ENCODE measurements at regions of chr14 and their contacts with region 1.

Region 1: DNA sequence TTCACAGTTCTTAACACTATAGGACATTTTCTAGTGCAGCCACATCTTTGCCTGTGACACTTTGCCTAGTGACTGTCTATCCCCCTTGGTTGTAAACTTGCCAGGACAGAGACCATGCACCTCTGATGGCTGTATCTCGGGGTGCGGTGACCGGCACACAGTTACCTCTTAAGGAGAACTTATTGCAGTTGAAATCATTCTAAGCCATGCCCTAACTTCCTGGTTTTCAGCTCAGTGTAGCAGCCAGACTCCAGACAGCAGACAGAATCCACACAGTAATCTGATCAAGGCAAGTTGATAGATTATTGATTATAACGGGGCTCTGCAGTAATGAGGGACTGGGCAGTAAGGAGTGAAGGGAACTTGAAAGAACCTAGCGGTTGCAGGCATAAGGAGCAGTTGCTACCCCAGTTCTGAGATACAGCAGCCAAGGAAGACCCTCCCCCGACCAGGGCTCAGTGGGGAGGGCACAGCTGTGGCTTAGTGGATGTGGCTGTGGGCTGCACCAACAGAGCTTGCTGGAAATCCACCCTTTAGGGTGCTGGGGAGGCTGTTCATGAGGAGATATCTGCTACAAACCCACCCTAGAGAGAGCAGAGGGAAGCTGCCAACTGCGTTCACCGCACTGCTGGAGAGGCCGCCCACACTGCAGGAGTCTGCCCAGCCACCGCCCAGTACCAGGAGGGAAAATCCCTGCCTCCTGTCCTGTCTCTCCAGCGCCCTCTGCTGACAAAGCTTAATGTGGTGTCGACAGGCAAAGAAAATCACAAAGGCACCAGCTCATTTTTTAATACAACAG is 58.2 kb upstream of the BEGAIN start:
- DNase-seq: peak; percentile 94
- ATAC-seq: peak; percentile 86
- H3K4me3 Mint-ChIP-seq: no peak overlapping the region
- H3K27ac Mint-ChIP-seq: no peak overlapping the region
- H3K4me1 Mint-ChIP-seq: peaks cover 35% of the 10 kb centered on the region
- H3K27me3 Mint-ChIP-seq: no peaks in the 10 kb centered on the region
- CTCF ChIP-seq: peak; percentile 82

Region 2: GRCh38 chr14:100375963-100376735 is 269.2 kb before region 1 on chr14:
- CTCF ChIA-PET with region 1: interaction called, 145 read pairs
- POLR2A ChIA-PET with region 1: no interaction called
- intact Hi-C with region 1: no loop called
- DNase-seq: peak; percentile 93
- ATAC-seq: peak; percentile 66
- H3K4me3 Mint-ChIP-seq: peak within 1 kb of the TSS; percentile 98
- H3K27ac Mint-ChIP-seq: peak within 1 kb of the TSS; percentile 100
- H3K4me1 Mint-ChIP-seq: peaks cover 37% of the 10 kb centered on the region
- H3K27me3 Mint-ChIP-seq: no peaks in the 10 kb centered on the region
- CTCF ChIP-seq: no peak

Region 3: DNA sequence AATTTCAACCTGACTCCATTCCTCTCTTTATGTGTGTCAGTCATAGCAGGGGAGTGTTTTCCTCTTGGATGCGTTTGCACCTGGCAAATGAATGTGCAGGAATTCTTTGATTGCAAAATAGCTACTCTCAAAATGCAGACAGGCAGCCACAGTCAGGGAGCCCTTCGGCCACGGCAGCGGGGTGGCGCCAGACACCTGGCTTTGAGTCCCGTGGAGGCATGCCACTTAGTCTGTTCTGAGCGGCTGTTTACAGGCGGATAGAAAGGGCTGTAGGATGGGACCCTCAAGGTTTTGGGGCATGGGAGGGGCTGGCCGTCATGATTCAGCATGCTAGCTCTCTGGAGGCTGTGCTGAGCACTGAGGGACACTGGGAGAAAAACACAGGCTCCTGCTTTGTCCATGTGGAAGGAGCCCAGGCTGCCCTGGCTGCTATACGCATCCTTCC is 205.2 kb before region 1 on chr14:
- CTCF ChIA-PET with region 1: interaction called, 67 read pairs
- POLR2A ChIA-PET with region 1: interaction called, 4 read pairs
- intact Hi-C with region 1: loop called (anchors 5 kb)
- DNase-seq: peak; percentile 60
- ATAC-seq: no peak
- H3K4me3 Mint-ChIP-seq: no peak overlapping the region
- H3K27ac Mint-ChIP-seq: no peak overlapping the region
- H3K4me1 Mint-ChIP-seq: peaks cover 26% of the 10 kb centered on the region
- H3K27me3 Mint-ChIP-seq: no peaks in the 10 kb centered on the region
- CTCF ChIP-seq: no peak

Region 4: GRCh38 chr14:100547633-100548294 is 97.6 kb before region 1 on chr14:
- CTCF ChIA-PET with region 1: interaction called, 24 read pairs
- POLR2A ChIA-PET with region 1: interaction called, 3 read pairs
- intact Hi-C with region 1: no loop called
- DNase-seq: peak; percentile 51
- ATAC-seq: peak; percentile 52
- H3K4me3 Mint-ChIP-seq: peak overlapping the region; percentile 26
- H3K27ac Mint-ChIP-seq: peak overlapping the region; percentile 22
- H3K4me1 Mint-ChIP-seq: peaks cover 18% of the 10 kb centered on the region
- H3K27me3 Mint-ChIP-seq: no peaks in the 10 kb centered on the region
- CTCF ChIP-seq: no peak

Region 5: DNA sequence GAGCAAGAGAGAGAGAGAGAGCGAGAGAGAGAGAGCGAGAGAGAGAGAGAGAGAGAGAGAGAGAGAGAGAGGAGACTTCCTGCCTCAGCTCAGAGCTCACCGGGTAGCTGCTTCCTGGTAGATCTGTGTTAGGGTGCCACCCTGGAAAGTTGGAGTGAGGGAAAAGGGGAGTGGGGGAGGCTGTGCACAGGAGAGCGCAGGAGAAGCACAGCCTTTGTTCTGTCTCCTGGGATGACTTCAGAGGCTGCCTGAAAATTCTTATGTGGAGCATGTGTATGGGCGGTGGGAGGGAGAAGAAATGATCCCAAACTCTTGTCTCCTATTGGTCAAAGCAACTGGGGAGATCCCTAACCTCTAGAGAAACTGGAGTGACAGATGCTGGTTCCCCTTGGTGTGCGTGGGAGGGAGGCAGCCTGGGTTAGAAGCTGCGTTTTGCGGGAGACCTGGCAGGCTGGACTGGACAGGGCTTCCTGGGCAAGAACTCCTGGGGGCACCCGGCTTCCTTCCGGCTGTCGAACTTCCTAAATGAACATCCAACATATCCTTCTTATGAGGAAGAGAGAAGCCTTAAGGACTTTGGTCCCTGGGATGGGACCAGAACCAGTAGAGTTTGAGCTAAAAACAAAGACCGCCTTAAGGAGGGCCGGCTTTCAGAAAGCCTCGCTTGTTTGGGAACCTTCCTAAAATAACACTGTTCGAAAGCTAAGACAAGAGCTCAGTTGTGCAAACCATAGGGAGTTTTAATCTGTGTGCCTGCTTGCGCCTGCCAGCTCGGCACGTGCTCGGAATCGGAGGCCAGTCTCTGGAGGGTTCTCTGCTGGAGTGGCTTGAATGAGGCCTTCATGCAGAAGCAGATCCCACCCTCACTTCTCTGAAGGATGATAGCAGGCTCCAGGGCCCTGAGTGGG is 27.7 kb before region 1 on chr14:
- CTCF ChIA-PET with region 1: interaction called, 27 read pairs
- POLR2A ChIA-PET with region 1: no interaction called
- intact Hi-C with region 1: no loop called
- DNase-seq: no peak
- ATAC-seq: no peak
- H3K4me3 Mint-ChIP-seq: no peak overlapping the region
- H3K27ac Mint-ChIP-seq: no peak overlapping the region
- H3K4me1 Mint-ChIP-seq: peaks cover 8% of the 10 kb centered on the region
- H3K27me3 Mint-ChIP-seq: peaks cover 2% of the 10 kb centered on the region
- CTCF ChIP-seq: no peak

Region 6: DNA sequence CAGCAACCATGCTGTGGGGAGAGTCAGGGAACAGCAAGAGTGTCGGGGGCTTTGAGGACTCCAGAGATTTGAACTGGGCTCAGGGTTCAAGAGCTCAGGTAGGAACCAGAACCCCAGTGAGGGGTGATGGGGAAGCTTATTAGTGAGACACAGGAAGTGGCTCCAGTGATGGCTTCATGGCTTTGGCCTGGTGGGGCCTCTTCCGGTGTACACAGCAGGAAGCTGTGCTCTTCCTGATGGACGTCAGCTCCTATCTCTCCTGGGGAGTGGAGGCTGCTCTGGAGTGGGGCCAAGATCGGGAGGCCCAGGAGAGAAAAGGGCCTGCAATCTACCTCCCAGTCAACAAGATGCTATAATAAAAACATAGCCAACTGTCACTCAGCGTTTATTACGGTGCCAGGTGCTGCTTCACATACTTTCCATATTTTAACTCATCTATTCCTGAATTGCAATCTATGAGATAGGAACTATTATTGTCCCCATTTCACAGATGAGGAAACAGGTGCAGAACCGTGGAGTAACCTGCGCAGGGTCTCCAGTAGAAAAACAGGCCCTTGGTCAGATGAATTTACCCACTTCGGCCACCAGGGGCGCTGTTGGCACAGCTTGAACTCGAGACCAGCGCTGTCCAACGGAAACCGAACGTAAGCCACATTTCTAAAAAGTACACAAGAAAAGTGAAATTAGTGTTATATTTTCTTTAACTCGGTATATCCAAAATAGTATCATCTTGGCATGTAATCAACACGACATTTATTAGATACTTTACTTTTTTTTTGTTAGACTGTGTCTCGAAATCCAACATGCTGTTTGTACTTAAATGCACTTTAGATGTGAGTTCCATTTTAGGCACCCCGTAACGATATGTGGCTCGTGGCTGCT is 17.7 kb after region 1 on chr14:
- CTCF ChIA-PET with region 1: interaction called, 26 read pairs
- POLR2A ChIA-PET with region 1: interaction called, 3 read pairs
- intact Hi-C with region 1: no loop called
- DNase-seq: peak; percentile 75
- ATAC-seq: peak; percentile 83
- H3K4me3 Mint-ChIP-seq: no peak overlapping the region
- H3K27ac Mint-ChIP-seq: peak overlapping the region; percentile 76
- H3K4me1 Mint-ChIP-seq: peaks cover 2% of the 10 kb centered on the region
- H3K27me3 Mint-ChIP-seq: peaks cover 6% of the 10 kb centered on the region
- CTCF ChIP-seq: peak; percentile 98

Region 7: GRCh38 chr14:100770889-100771800 is 125.8 kb after region 1 on chr14:
- CTCF ChIA-PET with region 1: no interaction called
- POLR2A ChIA-PET with region 1: no interaction called
- intact Hi-C with region 1: no loop called
- DNase-seq: no peak
- ATAC-seq: no peak
- H3K4me3 Mint-ChIP-seq: no peak overlapping the region
- H3K27ac Mint-ChIP-seq: no peak overlapping the region
- H3K4me1 Mint-ChIP-seq: no peaks in the 10 kb centered on the region
- H3K27me3 Mint-ChIP-seq: no peaks in the 10 kb centered on the region
- CTCF ChIP-seq: no peak

Measured in activated CD8-positive, alpha-beta T cell treated with anti-CD3 and anti-CD28 coated beads for 36 hours (primary cell).